PC-3 (cell line): ENCODE measurements at regions of chr1 and their contacts with region 1.

Region 1: GRCh38 chr1:147762233-147763024 is 2.0 kb upstream of the GJA5 start:
- DNase-seq: peak; percentile 89
- ATAC-seq: peak; percentile 68
- H3K4me3 ChIP-seq: peak overlapping the region; percentile 20; the same call in 1 of the 2 replicates
- H3K27ac ChIP-seq: peak overlapping the region; percentile 85
- H3K4me1 ChIP-seq: peaks cover 64% of the 10 kb centered on the region
- H3K27me3 ChIP-seq: no peaks in the 10 kb centered on the region
- CTCF ChIP-seq: no peak

Region 2: DNA sequence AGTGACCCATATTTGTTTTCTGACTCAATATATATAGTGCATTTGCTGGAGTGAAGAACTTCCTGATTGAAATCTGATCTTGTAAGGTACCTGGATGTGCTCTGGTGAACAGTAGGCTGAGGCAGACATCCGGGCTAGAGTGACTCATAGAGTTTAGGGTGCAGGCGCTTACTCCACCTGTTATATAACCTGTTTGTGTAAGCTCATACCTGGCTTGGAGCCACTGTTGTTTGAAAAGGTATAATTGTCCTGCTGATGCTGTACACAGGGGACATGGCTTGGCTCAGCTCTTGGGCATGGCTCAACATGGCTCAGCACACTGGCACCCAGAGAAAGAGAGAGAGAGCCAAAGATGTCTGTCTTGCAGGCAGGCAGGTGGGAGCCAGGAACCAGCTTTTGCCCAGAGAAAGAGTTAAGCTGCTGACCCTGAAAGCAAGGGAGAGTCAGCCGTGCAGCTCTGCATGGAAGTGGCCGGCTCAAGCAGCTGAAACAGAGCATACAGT is 45.3 kb before region 1 on chr1:
- CTCF ChIA-PET with region 1: no interaction called
- POLR2A ChIA-PET with region 1: interaction called, 10 read pairs
- intact Hi-C with region 1: no loop called
- DNase-seq: peak; percentile 99
- ATAC-seq: peak; percentile 93
- H3K4me3 ChIP-seq: no peak overlapping the region
- H3K27ac ChIP-seq: peak overlapping the region; percentile 91
- H3K4me1 ChIP-seq: peaks cover 43% of the 10 kb centered on the region
- H3K27me3 ChIP-seq: no peaks in the 10 kb centered on the region
- CTCF ChIP-seq: no peak